ENCODE measurements at regions of chr5 and their contacts with region 1.

Region 1: DNA sequence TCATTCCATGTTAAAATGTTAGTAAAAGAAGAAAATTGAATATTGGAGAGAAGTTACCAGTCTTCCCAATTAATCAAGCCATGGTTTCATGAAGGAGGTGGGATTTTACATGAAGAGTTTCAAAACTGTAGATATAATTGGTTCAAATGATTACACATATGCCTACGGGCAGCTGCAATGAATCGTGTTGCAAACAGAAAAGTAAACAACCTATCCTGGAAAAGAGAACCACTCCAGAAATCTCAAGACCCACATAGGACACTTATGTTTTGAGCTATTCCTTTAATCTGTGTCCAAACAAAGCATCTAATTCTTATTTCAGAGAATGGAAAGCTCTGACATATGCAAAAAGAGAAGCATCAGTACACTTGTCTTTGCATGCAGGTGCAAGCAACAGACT is 340.2 kb downstream of the NDUFS4 start:
- DNase-seq: no peak
- H3K4me3 ChIP-seq: no peak overlapping the region
- H3K27ac ChIP-seq: no peak overlapping the region
- H3K4me1 ChIP-seq: no peaks in the 10 kb centered on the region
- H3K27me3 ChIP-seq: no peaks in the 10 kb centered on the region
- CTCF ChIP-seq: no peak

Region 2: DNA sequence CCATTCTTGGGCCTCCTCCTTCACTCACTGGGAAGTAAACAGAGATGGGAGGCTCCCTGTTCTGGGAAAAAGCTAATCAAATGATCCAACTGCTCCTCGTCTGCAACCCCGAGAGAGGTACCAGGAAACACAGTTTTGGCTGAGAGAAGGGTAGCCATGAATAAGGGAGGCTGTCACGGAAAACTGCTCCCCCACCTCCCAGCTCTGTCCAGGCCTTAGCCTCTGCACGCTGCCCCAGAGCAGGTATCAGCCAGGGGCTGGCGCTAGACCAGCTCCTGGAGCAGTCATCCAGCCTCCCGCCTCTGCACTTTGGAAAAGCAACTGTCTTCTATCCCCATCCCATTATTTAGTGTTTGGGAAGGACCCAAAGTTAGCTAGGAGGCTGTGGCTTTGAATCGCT is 74.2 kb before region 1 on chr5:
- CTCF ChIA-PET with region 1: no interaction called
- POLR2A ChIA-PET with region 1: no interaction called
- intact Hi-C with region 1: no loop called
- DNase-seq: no peak
- H3K4me3 ChIP-seq: no peak overlapping the region
- H3K27ac ChIP-seq: no peak overlapping the region
- H3K4me1 ChIP-seq: no peaks in the 10 kb centered on the region
- H3K27me3 ChIP-seq: no peaks in the 10 kb centered on the region
- CTCF ChIP-seq: no peak

Region 3: GRCh38 chr5:54285686-54286085 is 385.0 kb after region 1 on chr5:
- CTCF ChIA-PET with region 1: no interaction called
- POLR2A ChIA-PET with region 1: interaction called, 10 read pairs
- intact Hi-C with region 1: no loop called
- DNase-seq: no peak
- H3K4me3 ChIP-seq: no peak overlapping the region
- H3K27ac ChIP-seq: no peak overlapping the region
- H3K4me1 ChIP-seq: no peaks in the 10 kb centered on the region
- H3K27me3 ChIP-seq: no peaks in the 10 kb centered on the region
- CTCF ChIP-seq: no peak

Measured in PC-9 (cell line).